Activated CD4-positive, alpha-beta T cell treated with anti-CD3 and anti-CD28 coated beads, Interleukin-2, amount 10 ng/mL, durations not matched to agents 24 days and 14 days (primary cell): ENCODE measurements at regions of chr14 and their contacts with region 1.

Region 1: GRCh38 chr14:20970983-20971704 is 15.9 kb downstream of the RNASE2 start:
- DNase-seq: peak; percentile 95
- H3K4me3 Mint-ChIP-seq: peak overlapping the region; percentile 92
- H3K27ac Mint-ChIP-seq: peak overlapping the region; percentile 70
- H3K4me1 Mint-ChIP-seq: peaks cover 13% of the 10 kb centered on the region
- H3K27me3 Mint-ChIP-seq: peaks cover 50% of the 10 kb centered on the region

Region 2: DNA sequence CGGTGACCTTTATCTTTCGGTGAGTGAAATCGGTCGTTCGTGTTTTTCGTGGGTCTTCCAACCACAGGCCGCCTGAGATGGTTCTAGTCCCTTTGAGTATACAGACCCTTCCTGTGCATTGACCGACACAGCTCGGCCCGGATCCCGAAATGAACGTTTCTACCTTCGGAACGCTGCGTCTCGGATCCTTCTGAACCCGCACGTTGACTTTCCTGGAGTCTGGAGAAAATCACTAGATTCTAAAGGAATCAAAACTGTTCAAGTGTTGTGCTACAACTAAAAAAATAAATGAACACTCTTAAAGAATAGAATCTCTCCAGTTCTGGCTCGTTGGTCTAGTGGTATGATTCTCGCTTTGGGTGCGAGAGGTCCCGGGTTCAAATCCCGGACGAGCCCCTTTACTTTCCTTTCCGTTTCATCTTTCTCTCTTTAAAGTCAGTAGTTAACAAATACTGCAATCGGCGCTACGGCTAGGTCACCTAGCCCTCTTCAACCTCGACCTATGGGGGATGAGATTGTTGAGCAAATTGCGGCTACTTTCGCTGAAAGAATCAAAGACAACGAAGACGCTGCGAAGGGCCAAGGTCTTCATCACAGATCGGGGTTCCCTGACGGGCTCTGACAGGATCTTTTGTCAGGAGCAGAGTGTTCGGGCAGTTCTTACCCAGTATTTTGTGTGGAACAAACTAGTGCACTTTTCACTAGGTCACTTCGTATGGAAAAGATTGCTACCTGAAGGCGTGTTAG is 338.3 kb before region 1 on chr14:
- intact Hi-C with region 1: loop called (anchors 5 kb)
- DNase-seq: peak; percentile 89
- H3K4me3 Mint-ChIP-seq: peak overlapping the region; percentile 88
- H3K27ac Mint-ChIP-seq: peak overlapping the region; percentile 84
- H3K4me1 Mint-ChIP-seq: peaks cover 38% of the 10 kb centered on the region
- H3K27me3 Mint-ChIP-seq: peaks cover 75% of the 10 kb centered on the region

Region 3: GRCh38 chr14:20697273-20698017 is 273.7 kb before region 1 on chr14:
- intact Hi-C with region 1: loop called (anchors 2 kb)
- DNase-seq: peak; percentile 90
- H3K4me3 Mint-ChIP-seq: no peak overlapping the region
- H3K27ac Mint-ChIP-seq: no peak overlapping the region
- H3K4me1 Mint-ChIP-seq: peaks cover 4% of the 10 kb centered on the region
- H3K27me3 Mint-ChIP-seq: peaks cover 7% of the 10 kb centered on the region

Region 4: DNA sequence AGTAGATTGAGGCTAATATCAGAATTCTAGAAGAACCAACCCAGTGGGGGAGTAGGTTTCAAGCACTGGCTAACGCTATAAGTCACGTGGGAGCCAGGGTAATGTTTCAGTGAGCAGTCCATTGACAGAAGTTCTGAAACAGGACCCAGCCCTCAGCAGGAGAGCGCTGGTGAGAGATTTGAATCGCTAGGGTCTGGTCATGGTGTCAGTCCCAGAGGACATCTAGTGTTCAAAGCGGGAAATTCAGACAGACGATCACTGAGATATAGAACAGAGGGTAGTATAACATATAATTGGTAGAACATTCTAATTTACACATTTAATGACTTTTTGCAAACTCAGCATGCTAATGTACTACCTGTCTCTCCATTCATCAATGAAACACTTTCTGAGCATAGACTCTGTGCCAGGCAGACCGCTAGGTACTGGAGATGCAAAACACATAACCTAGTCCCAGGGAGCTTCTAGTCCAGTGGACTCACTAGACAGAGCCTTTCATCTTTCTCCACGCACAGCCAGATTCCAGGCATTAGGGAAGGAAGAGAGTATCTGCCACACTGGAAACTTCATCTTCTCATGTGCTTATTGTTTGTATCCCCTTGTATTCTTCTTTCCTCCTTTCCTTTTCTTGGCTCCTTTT is 115.4 kb before region 1 on chr14:
- intact Hi-C with region 1: loop called (anchors 1 kb)
- DNase-seq: peak; percentile 83
- H3K4me3 Mint-ChIP-seq: no peak overlapping the region
- H3K27ac Mint-ChIP-seq: no peak overlapping the region
- H3K4me1 Mint-ChIP-seq: peaks cover 5% of the 10 kb centered on the region
- H3K27me3 Mint-ChIP-seq: peaks cover 27% of the 10 kb centered on the region

Region 5: GRCh38 chr14:20873370-20874177 is 97.6 kb before region 1 on chr14:
- intact Hi-C with region 1: loop called (anchors 5 kb)
- DNase-seq: peak; percentile 93
- H3K4me3 Mint-ChIP-seq: peak overlapping the region; percentile 53
- H3K27ac Mint-ChIP-seq: no peak overlapping the region
- H3K4me1 Mint-ChIP-seq: peaks cover 10% of the 10 kb centered on the region
- H3K27me3 Mint-ChIP-seq: peaks cover 28% of the 10 kb centered on the region

Region 6: GRCh38 chr14:20989572-20990551 is 18.7 kb after region 1 on chr14 and contains the start of gene METTL17:
- intact Hi-C with region 1: loop called (anchors 1 kb)
- DNase-seq: peak; percentile 96
- H3K4me3 Mint-ChIP-seq: peak within 1 kb of the TSS; percentile 96
- H3K27ac Mint-ChIP-seq: peak within 1 kb of the TSS; percentile 87
- H3K4me1 Mint-ChIP-seq: peaks cover 23% of the 10 kb centered on the region
- H3K27me3 Mint-ChIP-seq: no peaks in the 10 kb centered on the region
- total RNA-seq, gene METTL17: 94.6 and 99.1 TPM in 2 replicates